ENCODE measurements at regions of chr9 and their contacts with region 1.

Region 1: GRCh38 chr9:130860458-130861316 is 25.6 kb downstream of the ABL1 start:
- DNase-seq: peak; percentile 70 to 95
- H3K4me3 ChIP-seq: peak overlapping the region in 1 of 2 donors; percentile 4
- H3K27ac ChIP-seq: peak overlapping the region; percentile 65 to 80
- H3K4me1 ChIP-seq: peaks cover 17 to 45% of the 10 kb centered on the region in 2 donors
- H3K27me3 ChIP-seq: no peaks in the 10 kb centered on the region
- CTCF ChIP-seq: peak; percentile 60 to 68 (median 62)

Region 2: DNA sequence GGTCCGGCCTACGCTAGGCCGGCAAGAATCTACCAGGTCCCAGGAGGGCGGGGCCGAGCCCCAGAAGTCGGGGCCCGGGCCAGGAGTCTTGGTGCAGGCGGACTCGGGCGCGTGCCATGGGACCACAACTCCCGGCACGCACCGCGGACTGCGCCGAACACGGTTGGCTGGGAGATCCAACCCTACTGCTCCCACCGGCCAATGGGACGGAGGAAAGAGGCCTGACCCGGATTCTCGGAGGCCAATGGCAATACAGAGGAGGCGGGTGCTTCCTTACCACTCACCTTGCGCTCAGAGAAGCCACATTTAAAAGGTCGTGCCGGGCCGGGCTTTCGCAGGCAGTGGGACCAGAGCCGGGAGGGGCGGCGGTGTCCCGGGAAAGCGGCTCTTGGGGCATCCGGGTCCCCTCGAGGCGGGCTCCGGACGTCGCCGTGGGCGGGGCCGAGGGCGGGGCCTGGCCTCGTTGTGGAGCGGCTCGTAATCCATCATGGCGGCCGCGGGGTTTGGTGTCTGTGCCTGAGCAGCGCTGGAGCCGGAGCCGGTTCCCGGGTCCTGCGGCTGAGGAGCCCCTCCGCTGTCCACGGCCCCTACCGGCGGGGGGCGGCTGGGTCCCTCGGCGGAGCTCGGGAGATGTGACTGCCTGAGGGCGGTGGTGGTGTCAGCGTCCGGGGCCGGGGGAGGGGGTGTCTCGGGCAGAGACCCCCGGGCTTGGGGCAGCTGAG is 148.0 kb before region 1 on chr9:
- intact Hi-C with region 1: loop called (anchors 2 kb)
- DNase-seq: peak; percentile 96 to 99
- H3K4me3 ChIP-seq: peak overlapping the region; percentile 78 to 90
- H3K27ac ChIP-seq: peak overlapping the region; percentile 98 to 99
- H3K4me1 ChIP-seq: peaks cover 0 to 16% of the 10 kb centered on the region in 2 donors
- H3K27me3 ChIP-seq: no peaks in the 10 kb centered on the region
- CTCF ChIP-seq: no peak

Region 3: DNA sequence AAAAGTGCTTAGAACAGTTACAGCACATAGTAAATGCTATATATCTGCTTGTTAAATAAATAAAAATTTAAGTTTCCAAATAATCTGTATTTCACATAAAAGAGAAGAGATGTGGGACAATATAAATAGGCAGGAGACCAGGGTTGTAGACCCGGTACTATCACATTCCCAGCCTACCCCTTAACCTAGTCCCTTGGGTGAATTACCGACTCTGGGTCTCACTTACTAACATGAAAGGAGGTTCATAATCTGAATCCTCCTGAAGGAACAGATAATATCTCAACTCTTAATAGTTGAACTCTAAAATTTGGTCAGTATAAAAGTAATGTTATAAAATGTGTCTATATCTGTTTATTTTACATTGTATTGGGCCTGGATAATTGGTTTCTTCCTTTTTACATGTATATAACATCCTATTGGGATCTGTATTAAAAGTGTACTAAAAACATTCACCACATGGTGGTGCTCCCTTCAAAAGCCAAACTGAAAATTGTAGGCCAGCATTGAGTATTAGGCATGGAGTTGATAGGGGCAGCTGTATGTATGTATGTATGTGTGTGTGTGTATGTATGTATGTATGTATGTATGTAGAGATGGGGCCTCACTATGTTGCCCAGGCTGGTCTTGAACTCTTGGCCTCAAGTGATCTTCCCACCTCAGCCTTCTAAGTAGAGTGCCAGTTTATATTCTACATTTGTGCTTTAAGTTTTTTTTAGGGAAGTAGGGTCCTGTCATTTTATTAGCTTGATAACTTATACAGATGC is 89.8 kb before region 1 on chr9:
- intact Hi-C with region 1: loop called (anchors 1 kb)
- DNase-seq: no peak
- H3K4me3 ChIP-seq: no peak overlapping the region
- H3K27ac ChIP-seq: no peak overlapping the region
- H3K4me1 ChIP-seq: peaks cover 0 to 4% of the 10 kb centered on the region in 2 donors
- H3K27me3 ChIP-seq: no peaks in the 10 kb centered on the region
- CTCF ChIP-seq: peak; percentile 49 to 79 (median 71)

Region 4: DNA sequence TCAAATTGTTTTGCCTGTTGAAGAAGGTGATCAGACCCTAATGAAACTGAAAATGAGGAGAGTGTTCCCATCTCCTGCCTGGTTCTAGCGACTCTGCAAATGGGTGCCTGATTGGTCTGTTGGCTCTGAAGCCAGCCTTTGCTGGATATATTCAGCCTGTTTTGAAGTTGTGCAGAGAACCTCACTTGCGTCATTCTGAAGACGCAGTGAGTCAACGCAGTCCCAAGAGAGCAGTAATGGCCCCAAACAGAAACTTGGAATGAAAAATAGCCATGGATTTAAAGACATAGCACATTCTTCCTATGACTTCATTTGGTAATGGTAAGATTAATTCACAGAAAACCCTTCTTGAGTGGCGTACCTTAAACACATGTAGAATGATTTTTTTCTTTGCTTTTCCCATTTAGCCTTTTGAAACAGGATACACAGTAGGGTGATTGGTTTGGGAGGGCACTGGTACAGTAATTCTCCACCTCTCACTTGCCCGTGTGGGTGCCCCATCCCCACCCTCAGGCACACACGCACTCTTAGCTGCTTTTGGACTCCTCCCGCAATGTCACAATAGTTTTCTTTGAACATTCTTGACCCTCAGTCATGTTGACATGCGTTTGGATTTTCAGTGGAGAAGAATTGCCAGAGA is 79.7 kb before region 1 on chr9:
- intact Hi-C with region 1: loop called (anchors 2 kb)
- DNase-seq: peak; percentile 53 to 92
- H3K4me3 ChIP-seq: peak overlapping the region; percentile 52 to 64
- H3K27ac ChIP-seq: peak overlapping the region; percentile 94 to 97
- H3K4me1 ChIP-seq: peaks cover 4 to 41% of the 10 kb centered on the region in 2 donors
- H3K27me3 ChIP-seq: no peaks in the 10 kb centered on the region
- CTCF ChIP-seq: no peak

Region 5: GRCh38 chr9:130834371-130835311 is 26.0 kb before region 1 on chr9 and contains the start of gene ABL1:
- intact Hi-C with region 1: loop called (anchors 1 kb)
- DNase-seq: peak; percentile 62 to 92
- H3K4me3 ChIP-seq: peak within 1 kb of the TSS; percentile 77 to 96
- H3K27ac ChIP-seq: peak within 1 kb of the TSS; percentile 95 to 98
- H3K4me1 ChIP-seq: peaks cover 12 to 26% of the 10 kb centered on the region in 2 donors
- H3K27me3 ChIP-seq: no peaks in the 10 kb centered on the region
- CTCF ChIP-seq: no peak
- total RNA-seq, gene ABL1: 99.1 TPM

Region 6: GRCh38 chr9:130847327-130848217 is 13.1 kb before region 1 on chr9:
- intact Hi-C with region 1: loop called (anchors 1 kb)
- DNase-seq: peak; percentile 53 to 93
- H3K4me3 ChIP-seq: peak overlapping the region; percentile 40 to 50
- H3K27ac ChIP-seq: peak overlapping the region; percentile 95 to 98
- H3K4me1 ChIP-seq: peaks cover 19 to 60% of the 10 kb centered on the region in 2 donors
- H3K27me3 ChIP-seq: no peaks in the 10 kb centered on the region
- CTCF ChIP-seq: peak in 2 of 3 experiments; percentile 26 to 29